CD4-positive, alpha-beta T cell (primary cell): ENCODE measurements at regions of chr6 and their contacts with region 1.

Region 1: DNA sequence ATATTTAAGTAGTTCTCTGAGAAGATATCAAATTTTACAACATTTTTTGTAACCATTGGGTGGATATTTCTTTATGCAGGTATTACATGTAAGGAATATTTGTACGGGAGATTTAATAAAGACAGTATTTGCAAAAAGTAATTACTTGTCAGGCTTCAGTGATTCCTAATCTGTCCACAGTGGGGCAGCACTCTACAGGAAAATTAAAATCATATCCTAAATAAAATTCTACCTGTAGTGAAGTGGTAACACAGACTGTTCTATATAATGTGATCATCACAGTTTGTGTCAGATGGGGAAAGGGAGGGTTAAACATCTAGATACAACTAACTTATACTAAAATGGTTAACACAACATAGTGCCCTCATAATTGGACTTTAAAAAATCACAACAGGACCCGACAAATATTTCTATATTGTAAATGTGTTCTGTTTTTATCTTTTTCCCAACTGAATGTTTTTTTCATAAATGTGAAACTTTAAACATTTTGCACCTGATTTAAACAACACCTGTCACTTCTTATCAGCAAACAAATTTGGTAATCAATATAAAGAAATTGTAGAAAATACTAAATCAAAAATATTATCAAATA is 145.6 kb upstream of the MANEA start:
- DNase-seq: peak in 10 of 14 experiments; percentile 3 to 51 (median 32)
- ATAC-seq: peak; percentile 54
- H3K4me3 ChIP-seq: no peak overlapping the region
- H3K4me3 Mint-ChIP-seq: no peak overlapping the region
- H3K27ac ChIP-seq: no peak overlapping the region
- H3K27ac Mint-ChIP-seq: no peak overlapping the region
- H3K4me1 ChIP-seq: no peaks in the 10 kb centered on the region
- H3K4me1 Mint-ChIP-seq: no peaks in the 10 kb centered on the region
- H3K27me3 ChIP-seq: no peaks in the 10 kb centered on the region
- H3K27me3 Mint-ChIP-seq: peaks cover 5% of the 10 kb centered on the region
- CTCF ChIP-seq: peak; percentile 73

Region 2: DNA sequence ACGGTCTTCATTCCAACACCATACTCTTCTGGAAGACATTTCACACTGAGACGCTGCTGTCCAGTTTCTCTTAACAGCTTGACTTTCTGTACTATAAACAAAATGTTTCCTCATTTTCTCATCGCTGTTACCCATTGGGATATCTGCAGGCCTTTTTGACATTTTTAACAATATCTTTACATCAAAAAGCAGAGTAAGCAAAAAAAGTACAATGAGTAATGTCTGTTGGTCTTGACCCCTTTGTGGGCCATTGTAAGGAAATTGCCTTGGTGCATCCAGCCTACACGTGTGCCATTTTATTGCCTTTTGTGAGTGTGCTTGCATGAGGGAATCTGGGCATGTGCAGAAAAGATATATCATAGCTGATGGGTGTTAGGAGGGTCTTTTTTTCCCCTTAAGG is 16.5 kb after region 1 on chr6:
- CTCF ChIA-PET with region 1: no interaction called
- POLR2A ChIA-PET with region 1: no interaction called
- intact Hi-C with region 1: no loop called
- DNase-seq: no peak
- ATAC-seq: no peak
- H3K4me3 ChIP-seq: no peak overlapping the region
- H3K4me3 Mint-ChIP-seq: no peak overlapping the region
- H3K27ac ChIP-seq: no peak overlapping the region
- H3K27ac Mint-ChIP-seq: no peak overlapping the region
- H3K4me1 ChIP-seq: no peaks in the 10 kb centered on the region
- H3K4me1 Mint-ChIP-seq: no peaks in the 10 kb centered on the region
- H3K27me3 ChIP-seq: peaks cover 0 to 3% of the 10 kb centered on the region in 2 experiments
- H3K27me3 Mint-ChIP-seq: no peaks in the 10 kb centered on the region
- CTCF ChIP-seq: no peak

Region 3: GRCh38 chr6:95685822-95686221 is 254.1 kb after region 1 on chr6:
- CTCF ChIA-PET with region 1: no interaction called
- POLR2A ChIA-PET with region 1: no interaction called
- intact Hi-C with region 1: loop called in 1 of 2 experiments (anchors 10 kb)
- DNase-seq: no peak
- ATAC-seq: no peak
- H3K4me3 ChIP-seq: no peak overlapping the region
- H3K4me3 Mint-ChIP-seq: no peak overlapping the region
- H3K27ac ChIP-seq: no peak overlapping the region
- H3K27ac Mint-ChIP-seq: no peak overlapping the region
- H3K4me1 ChIP-seq: no peaks in the 10 kb centered on the region
- H3K4me1 Mint-ChIP-seq: no peaks in the 10 kb centered on the region
- H3K27me3 ChIP-seq: no peaks in the 10 kb centered on the region
- H3K27me3 Mint-ChIP-seq: no peaks in the 10 kb centered on the region
- CTCF ChIP-seq: no peak

Region 4: GRCh38 chr6:95866732-95867131 is 435.0 kb after region 1 on chr6:
- CTCF ChIA-PET with region 1: no interaction called
- POLR2A ChIA-PET with region 1: no interaction called
- intact Hi-C with region 1: loop called in 1 of 2 experiments (anchors 5 kb)
- DNase-seq: no peak
- ATAC-seq: no peak
- H3K4me3 ChIP-seq: no peak overlapping the region
- H3K4me3 Mint-ChIP-seq: no peak overlapping the region
- H3K27ac ChIP-seq: no peak overlapping the region
- H3K27ac Mint-ChIP-seq: no peak overlapping the region
- H3K4me1 ChIP-seq: no peaks in the 10 kb centered on the region
- H3K4me1 Mint-ChIP-seq: no peaks in the 10 kb centered on the region
- H3K27me3 ChIP-seq: no peaks in the 10 kb centered on the region
- H3K27me3 Mint-ChIP-seq: no peaks in the 10 kb centered on the region
- CTCF ChIP-seq: no peak

Region 5: GRCh38 chr6:95923518-95923917 is 491.8 kb after region 1 on chr6:
- CTCF ChIA-PET with region 1: no interaction called
- POLR2A ChIA-PET with region 1: no interaction called
- intact Hi-C with region 1: loop called in 1 of 2 experiments (anchors 10 kb)
- DNase-seq: peak in 1 of 14 experiments; percentile 4
- ATAC-seq: no peak
- H3K4me3 ChIP-seq: no peak overlapping the region
- H3K4me3 Mint-ChIP-seq: no peak overlapping the region
- H3K27ac ChIP-seq: no peak overlapping the region
- H3K27ac Mint-ChIP-seq: no peak overlapping the region
- H3K4me1 ChIP-seq: no peaks in the 10 kb centered on the region
- H3K4me1 Mint-ChIP-seq: no peaks in the 10 kb centered on the region
- H3K27me3 ChIP-seq: no peaks in the 10 kb centered on the region
- H3K27me3 Mint-ChIP-seq: no peaks in the 10 kb centered on the region
- CTCF ChIP-seq: no peak

Region 6: GRCh38 chr6:96468681-96469224 is 1037.0 kb after region 1 on chr6:
- CTCF ChIA-PET with region 1: no interaction called
- POLR2A ChIA-PET with region 1: no interaction called
- intact Hi-C with region 1: loop called (anchors 5 to 10 kb)
- DNase-seq: peak in 2 of 14 experiments; percentile 4 to 19
- ATAC-seq: no peak
- H3K4me3 ChIP-seq: no peak overlapping the region
- H3K4me3 Mint-ChIP-seq: no peak overlapping the region
- H3K27ac ChIP-seq: no peak overlapping the region
- H3K27ac Mint-ChIP-seq: no peak overlapping the region
- H3K4me1 ChIP-seq: peaks cover 3% of the 10 kb centered on the region
- H3K4me1 Mint-ChIP-seq: peaks cover 12% of the 10 kb centered on the region
- H3K27me3 ChIP-seq: no peaks in the 10 kb centered on the region
- H3K27me3 Mint-ChIP-seq: no peaks in the 10 kb centered on the region
- CTCF ChIP-seq: peak; percentile 50

Region 7: DNA sequence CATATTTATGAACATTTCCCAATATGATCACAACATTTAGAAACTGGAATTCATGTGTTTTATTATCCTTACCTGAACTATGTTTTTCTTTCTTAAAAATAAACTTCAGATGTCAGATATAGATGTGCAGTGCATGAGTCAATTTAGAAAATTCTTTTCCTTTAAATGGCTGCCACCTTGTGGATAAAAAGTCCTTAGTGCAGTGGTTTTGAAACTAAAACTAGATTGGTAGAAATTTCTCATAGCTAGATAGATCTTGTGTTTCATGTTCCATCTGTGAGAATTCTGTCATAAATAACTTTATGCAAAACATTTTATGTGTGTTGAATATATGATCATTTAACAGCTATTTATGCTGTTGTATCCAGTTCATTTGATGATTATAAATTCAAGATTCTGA is 1627.7 kb after region 1 on chr6:
- CTCF ChIA-PET with region 1: no interaction called
- POLR2A ChIA-PET with region 1: no interaction called
- intact Hi-C with region 1: loop called in 1 of 2 experiments (anchors 5 kb)
- DNase-seq: peak in 3 of 14 experiments; percentile 49 to 55 (median 49)
- ATAC-seq: peak; percentile 32
- H3K4me3 ChIP-seq: no peak overlapping the region
- H3K4me3 Mint-ChIP-seq: no peak overlapping the region
- H3K27ac ChIP-seq: no peak overlapping the region
- H3K27ac Mint-ChIP-seq: no peak overlapping the region
- H3K4me1 ChIP-seq: no peaks in the 10 kb centered on the region
- H3K4me1 Mint-ChIP-seq: no peaks in the 10 kb centered on the region
- H3K27me3 ChIP-seq: no peaks in the 10 kb centered on the region
- H3K27me3 Mint-ChIP-seq: no peaks in the 10 kb centered on the region
- CTCF ChIP-seq: peak; percentile 69